CD4-positive, alpha-beta T cell (primary cell): ENCODE measurements at regions of chr4 and their contacts with region 1.

Region 1: GRCh38 chr4:27010334-27010940 is 149.8 kb downstream of the STIM2 start:
- DNase-seq: peak; percentile 25 to 78 (median 56)
- ATAC-seq: peak; percentile 95
- H3K4me3 ChIP-seq: no peak overlapping the region
- H3K4me3 Mint-ChIP-seq: no peak overlapping the region
- H3K27ac ChIP-seq: no peak overlapping the region
- H3K27ac Mint-ChIP-seq: no peak overlapping the region
- H3K4me1 ChIP-seq: peaks cover 4% of the 10 kb centered on the region
- H3K4me1 Mint-ChIP-seq: peaks cover 17% of the 10 kb centered on the region
- H3K27me3 ChIP-seq: no peaks in the 10 kb centered on the region
- H3K27me3 Mint-ChIP-seq: no peaks in the 10 kb centered on the region
- CTCF ChIP-seq: peak; percentile 96

Region 2: DNA sequence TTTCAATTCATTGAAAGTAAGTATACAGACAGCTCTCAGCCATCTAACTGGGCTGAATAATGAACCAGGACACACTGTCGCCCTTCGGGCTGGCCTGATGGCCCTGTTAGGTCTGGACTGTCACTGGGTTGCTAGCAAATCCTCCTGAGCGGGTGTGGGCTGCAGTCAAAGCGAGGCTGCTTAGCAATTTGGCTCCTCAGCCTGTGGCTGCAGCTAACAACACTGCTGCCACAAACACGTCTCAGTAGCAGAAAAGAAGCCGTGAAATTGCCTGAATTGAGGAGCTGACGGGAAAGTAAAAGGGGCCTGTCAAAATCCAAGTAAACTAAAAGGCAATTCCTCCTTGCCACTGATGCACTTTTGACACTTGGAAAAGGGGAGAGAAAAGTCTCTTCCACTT is 1023.6 kb before region 1 on chr4:
- CTCF ChIA-PET with region 1: no interaction called
- POLR2A ChIA-PET with region 1: no interaction called
- intact Hi-C with region 1: loop called in 1 of 2 experiments (anchors 5 kb)
- DNase-seq: no peak
- ATAC-seq: no peak
- H3K4me3 ChIP-seq: no peak overlapping the region
- H3K4me3 Mint-ChIP-seq: no peak overlapping the region
- H3K27ac ChIP-seq: no peak overlapping the region
- H3K27ac Mint-ChIP-seq: no peak overlapping the region
- H3K4me1 ChIP-seq: peaks cover 6% of the 10 kb centered on the region
- H3K4me1 Mint-ChIP-seq: peaks cover 8% of the 10 kb centered on the region
- H3K27me3 ChIP-seq: no peaks in the 10 kb centered on the region
- H3K27me3 Mint-ChIP-seq: no peaks in the 10 kb centered on the region
- CTCF ChIP-seq: no peak

Region 3: DNA sequence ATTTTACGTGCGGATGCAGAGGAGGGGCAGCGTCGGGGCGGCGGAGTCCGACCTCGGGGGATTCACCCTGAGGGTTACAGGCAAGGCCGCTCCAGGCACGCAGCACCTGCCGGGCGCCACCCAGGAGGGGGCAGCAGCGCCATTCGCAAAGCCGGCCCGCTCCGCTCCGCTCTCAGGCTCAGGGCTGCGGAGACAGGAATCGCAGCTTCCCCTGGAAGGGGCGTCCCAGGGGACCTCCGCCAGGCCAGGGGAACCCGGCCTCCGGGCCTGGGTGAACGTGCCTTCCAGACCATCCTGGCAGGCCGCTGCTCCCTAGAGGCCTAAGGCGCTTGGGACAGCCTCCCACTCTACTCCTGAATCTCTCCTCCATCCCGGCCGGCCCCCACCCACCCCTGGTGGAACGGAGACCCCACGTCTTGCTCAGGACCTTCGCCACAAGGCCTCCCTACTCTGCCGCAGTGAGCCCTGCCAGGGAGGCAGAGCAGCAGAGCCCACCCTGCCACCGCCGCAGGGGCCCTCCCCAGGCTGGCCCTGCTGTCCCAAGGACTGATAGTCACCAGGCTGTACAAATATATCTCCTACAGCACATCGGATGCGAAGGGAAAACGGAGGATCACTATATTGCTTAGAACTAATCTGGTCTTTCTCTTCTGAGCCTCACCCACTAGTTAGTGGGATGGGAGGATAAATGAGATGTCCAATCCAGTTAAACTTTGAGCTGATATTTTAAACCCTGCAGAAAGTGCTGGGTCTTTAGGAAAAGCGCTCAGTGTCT is 981.5 kb before region 1 on chr4:
- CTCF ChIA-PET with region 1: no interaction called
- POLR2A ChIA-PET with region 1: no interaction called
- intact Hi-C with region 1: loop called in 1 of 2 experiments (anchors 2 kb)
- DNase-seq: peak; percentile 22 to 73 (median 49)
- ATAC-seq: peak; percentile 63
- H3K4me3 ChIP-seq: no peak overlapping the region
- H3K4me3 Mint-ChIP-seq: no peak overlapping the region
- H3K27ac ChIP-seq: no peak overlapping the region
- H3K27ac Mint-ChIP-seq: no peak overlapping the region
- H3K4me1 ChIP-seq: peaks cover 6% of the 10 kb centered on the region
- H3K4me1 Mint-ChIP-seq: no peaks in the 10 kb centered on the region
- H3K27me3 ChIP-seq: peaks cover 6 to 7% of the 10 kb centered on the region in 2 experiments
- H3K27me3 Mint-ChIP-seq: peaks cover 25% of the 10 kb centered on the region
- CTCF ChIP-seq: peak; percentile 52

Region 4: DNA sequence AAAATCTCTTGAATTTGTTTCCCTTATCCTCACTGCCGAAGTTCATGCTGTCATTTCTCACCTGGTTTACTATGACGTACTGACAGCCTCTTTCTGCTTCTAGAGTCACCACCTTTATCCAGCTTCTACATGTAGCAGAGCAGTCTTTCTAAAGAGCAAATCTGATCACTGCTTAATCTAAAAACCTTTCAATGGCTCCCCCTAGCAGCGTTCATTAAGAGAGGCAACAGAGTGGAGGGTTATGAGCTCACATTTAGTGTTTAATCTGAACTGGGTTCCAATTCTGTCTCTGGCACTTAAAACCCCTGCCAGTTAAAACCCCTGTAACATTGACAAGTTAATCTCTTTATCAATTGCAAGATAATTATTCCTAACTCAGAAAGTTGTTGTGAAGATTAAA is 685.2 kb before region 1 on chr4:
- CTCF ChIA-PET with region 1: no interaction called
- POLR2A ChIA-PET with region 1: interaction called, 5 read pairs
- intact Hi-C with region 1: loop called (anchors 5 to 10 kb)
- DNase-seq: peak in 6 of 14 experiments; percentile 10 to 79 (median 51)
- ATAC-seq: peak; percentile 34
- H3K4me3 ChIP-seq: no peak overlapping the region
- H3K4me3 Mint-ChIP-seq: peak overlapping the region; percentile 73
- H3K27ac ChIP-seq: no peak overlapping the region
- H3K27ac Mint-ChIP-seq: peak overlapping the region; percentile 40
- H3K4me1 ChIP-seq: peaks cover 24% of the 10 kb centered on the region
- H3K4me1 Mint-ChIP-seq: peaks cover 54% of the 10 kb centered on the region
- H3K27me3 ChIP-seq: no peaks in the 10 kb centered on the region
- H3K27me3 Mint-ChIP-seq: no peaks in the 10 kb centered on the region
- CTCF ChIP-seq: peak; percentile 61

Region 5: DNA sequence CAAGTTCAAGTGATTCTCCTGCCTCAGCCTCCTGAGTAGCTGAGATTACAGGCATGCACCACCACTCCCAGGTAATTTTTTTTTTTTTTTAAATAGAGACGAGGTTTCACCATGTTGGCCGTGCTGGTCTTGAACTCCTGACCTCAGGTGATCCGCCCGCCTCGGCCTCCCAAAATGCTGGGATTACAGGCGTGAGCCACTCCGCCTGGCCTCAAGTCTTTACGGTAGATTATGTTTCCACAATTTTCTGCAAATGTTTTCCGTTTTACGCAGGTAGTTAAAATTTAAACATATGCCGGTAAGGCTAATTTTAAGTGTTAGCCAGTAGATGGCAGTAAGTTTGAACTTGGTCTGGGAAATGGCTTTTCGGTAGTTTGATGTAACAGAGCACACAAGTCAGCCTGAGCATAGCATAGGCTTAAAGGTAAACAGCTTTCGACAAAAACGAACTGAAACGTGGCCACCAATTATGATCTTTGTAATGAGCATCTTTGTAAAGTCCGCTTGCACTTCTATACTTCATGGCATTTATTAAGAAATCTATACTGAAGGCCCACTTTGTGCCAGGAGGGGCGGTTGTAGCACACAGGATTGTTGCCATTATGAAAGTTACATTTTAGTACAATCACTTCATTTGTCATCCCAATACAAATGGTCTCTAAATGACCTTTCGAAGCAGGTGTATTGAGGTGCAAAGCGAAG is 551.2 kb before region 1 on chr4:
- CTCF ChIA-PET with region 1: no interaction called
- POLR2A ChIA-PET with region 1: no interaction called
- intact Hi-C with region 1: loop called (anchors 1 to 2 kb)
- DNase-seq: peak in 4 of 14 experiments; percentile 6 to 60 (median 54)
- ATAC-seq: peak; percentile 50
- H3K4me3 ChIP-seq: no peak overlapping the region
- H3K4me3 Mint-ChIP-seq: peak overlapping the region; percentile 77
- H3K27ac ChIP-seq: no peak overlapping the region
- H3K27ac Mint-ChIP-seq: peak overlapping the region; percentile 64
- H3K4me1 ChIP-seq: no peaks in the 10 kb centered on the region
- H3K4me1 Mint-ChIP-seq: peaks cover 28% of the 10 kb centered on the region
- H3K27me3 ChIP-seq: no peaks in the 10 kb centered on the region
- H3K27me3 Mint-ChIP-seq: no peaks in the 10 kb centered on the region
- CTCF ChIP-seq: peak; percentile 58

Region 6: GRCh38 chr4:26787461-26788340 is 222.7 kb before region 1 on chr4:
- CTCF ChIA-PET with region 1: no interaction called
- POLR2A ChIA-PET with region 1: interaction called, 3 read pairs
- intact Hi-C with region 1: loop called (anchors 1 to 5 kb)
- DNase-seq: peak in 7 of 14 experiments; percentile 5 to 54 (median 32)
- ATAC-seq: peak; percentile 71
- H3K4me3 ChIP-seq: no peak overlapping the region
- H3K4me3 Mint-ChIP-seq: no peak overlapping the region
- H3K27ac ChIP-seq: no peak overlapping the region
- H3K27ac Mint-ChIP-seq: no peak overlapping the region
- H3K4me1 ChIP-seq: peaks cover 8% of the 10 kb centered on the region
- H3K4me1 Mint-ChIP-seq: peaks cover 14% of the 10 kb centered on the region
- H3K27me3 ChIP-seq: no peaks in the 10 kb centered on the region
- H3K27me3 Mint-ChIP-seq: no peaks in the 10 kb centered on the region
- CTCF ChIP-seq: peak; percentile 27